Tibial artery (tissue), 4 donors: ENCODE measurements at regions of chr5 and their contacts with region 1.

Region 1: GRCh38 chr5:15116996-15117395 is 245.4 kb upstream of the ANKH start:
- DNase-seq: no peak
- H3K4me3 ChIP-seq: no peak overlapping the region
- H3K27ac ChIP-seq: no peak overlapping the region
- H3K4me1 ChIP-seq: no peaks in the 10 kb centered on the region
- H3K27me3 ChIP-seq: no peaks in the 10 kb centered on the region
- CTCF ChIP-seq: no peak

Region 2: DNA sequence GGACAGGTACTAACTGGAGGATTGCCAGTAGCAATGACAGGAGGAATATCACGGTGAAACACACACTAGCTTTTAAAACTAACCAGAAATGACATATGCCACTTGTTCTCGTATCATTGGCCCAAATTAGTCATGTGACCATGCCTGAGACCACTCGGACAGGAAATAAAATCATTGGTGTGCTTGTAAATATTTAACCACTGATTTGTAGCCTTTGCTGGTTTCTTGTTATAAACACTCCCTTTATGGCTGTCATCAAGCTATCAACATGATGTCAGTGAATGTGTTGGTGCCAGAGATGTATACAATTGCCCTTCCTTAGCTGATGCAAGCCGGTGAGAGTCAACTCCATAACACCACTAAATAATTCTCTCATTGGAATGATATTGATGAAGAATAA is 121.8 kb before region 1 on chr5:
- intact Hi-C with region 1: no loop called
- DNase-seq: no peak
- H3K4me3 ChIP-seq: no peak overlapping the region
- H3K27ac ChIP-seq: no peak overlapping the region
- H3K4me1 ChIP-seq: no peaks in the 10 kb centered on the region
- H3K27me3 ChIP-seq: no peaks in the 10 kb centered on the region
- CTCF ChIP-seq: no peak

Region 3: GRCh38 chr5:15092801-15093200 is 24.2 kb before region 1 on chr5:
- intact Hi-C with region 1: no loop called
- DNase-seq: no peak
- H3K4me3 ChIP-seq: no peak overlapping the region
- H3K27ac ChIP-seq: no peak overlapping the region
- H3K4me1 ChIP-seq: no peaks in the 10 kb centered on the region
- H3K27me3 ChIP-seq: no peaks in the 10 kb centered on the region
- CTCF ChIP-seq: no peak

Region 4: GRCh38 chr5:15249152-15249551 is 132.2 kb after region 1 on chr5:
- intact Hi-C with region 1: no loop called
- DNase-seq: no peak
- H3K4me3 ChIP-seq: no peak overlapping the region
- H3K27ac ChIP-seq: no peak overlapping the region
- H3K4me1 ChIP-seq: no peaks in the 10 kb centered on the region
- H3K27me3 ChIP-seq: no peaks in the 10 kb centered on the region
- CTCF ChIP-seq: no peak

Region 5: GRCh38 chr5:15821506-15821905 is 704.5 kb after region 1 on chr5:
- intact Hi-C with region 1: loop called (anchors 10 kb)
- DNase-seq: no peak
- H3K4me3 ChIP-seq: no peak overlapping the region
- H3K27ac ChIP-seq: no peak overlapping the region
- H3K4me1 ChIP-seq: peaks cover 0 to 19% (median 5%) of the 10 kb centered on the region in 4 donors
- H3K27me3 ChIP-seq: no peaks in the 10 kb centered on the region
- CTCF ChIP-seq: no peak